ENCODE measurements at regions of chr1 and their contacts with region 1.

Region 1: GRCh38 chr1:154974063-154974807 is at the start of gene CKS1B:
- DNase-seq: peak; percentile 99
- H3K4me3 ChIP-seq: peak within 1 kb of the TSS; percentile 52 to 82
- H3K27ac ChIP-seq: peak within 1 kb of the TSS; percentile 98 to 99
- H3K4me1 ChIP-seq: peaks cover 14% of the 10 kb centered on the region
- H3K27me3 ChIP-seq: no peaks in the 10 kb centered on the region
- CTCF ChIP-seq: no peak
- POLR2A ChIP-seq: peak; percentile 60
- total RNA-seq, gene CKS1B: 33.5 to 47.5 TPM

Region 2: GRCh38 chr1:154847891-154848290 is 126.3 kb before region 1 on chr1:
- intact Hi-C with region 1: no loop called
- DNase-seq: no peak
- H3K4me3 ChIP-seq: no peak overlapping the region
- H3K27ac ChIP-seq: no peak overlapping the region
- H3K4me1 ChIP-seq: no peaks in the 10 kb centered on the region
- H3K27me3 ChIP-seq: no peaks in the 10 kb centered on the region
- CTCF ChIP-seq: no peak
- POLR2A ChIP-seq: no peak

Region 3: DNA sequence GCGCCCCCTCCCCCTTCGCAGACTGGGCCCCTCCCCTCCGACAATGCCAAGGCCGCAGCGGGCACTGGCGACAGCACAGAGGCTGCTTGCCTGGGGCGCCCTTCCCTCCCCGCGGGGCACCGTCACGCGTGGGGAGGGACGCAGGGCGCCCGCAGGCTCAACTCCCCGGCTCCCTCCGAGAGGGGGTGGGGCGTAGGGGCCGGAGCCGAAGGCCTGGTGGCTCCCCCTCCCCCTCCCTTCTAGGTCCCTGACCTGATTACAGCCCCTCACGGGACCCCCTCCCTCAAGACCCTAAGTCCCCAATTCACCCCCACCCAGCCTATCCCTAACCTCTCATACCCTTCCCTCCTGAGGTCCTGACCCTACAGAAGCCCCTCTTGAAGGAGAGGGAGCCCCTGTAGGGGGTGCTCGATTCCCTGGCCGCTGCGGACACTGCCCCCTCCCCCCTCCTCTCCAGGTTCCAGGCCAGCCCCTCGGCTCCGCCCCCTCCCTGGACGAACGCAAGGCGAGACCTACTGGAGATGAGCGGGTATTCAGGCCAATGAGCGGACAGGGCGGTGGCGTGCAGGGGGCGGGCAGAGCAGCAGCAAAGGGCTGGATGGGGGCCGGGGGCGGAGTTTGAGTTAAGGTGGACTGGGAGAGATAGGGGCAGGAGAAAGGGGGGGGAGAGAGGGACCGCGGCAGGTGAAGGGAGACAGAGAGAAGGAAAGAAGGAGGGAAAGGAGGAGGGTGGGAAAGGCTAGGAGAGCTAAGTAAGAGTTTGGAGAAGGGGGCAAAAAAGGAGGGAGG is 27.6 kb after region 1 on chr1:
- intact Hi-C with region 1: loop called (anchors 2 kb)
- DNase-seq: peak; percentile 100
- H3K4me3 ChIP-seq: peak overlapping the region; percentile 68 to 97
- H3K27ac ChIP-seq: peak overlapping the region; percentile 100
- H3K4me1 ChIP-seq: peaks cover 23% of the 10 kb centered on the region
- H3K27me3 ChIP-seq: no peaks in the 10 kb centered on the region
- CTCF ChIP-seq: peak in 3 of 4 experiments; percentile 43 to 60 (median 48)
- POLR2A ChIP-seq: peak; percentile 75

Measured in prostate gland (tissue), 2 donors.